IMR-90 (cell line): ENCODE measurements at regions of chr14 and their contacts with region 1.

Region 1: GRCh38 chr14:83913466-83913865 is 1616.5 kb upstream of the FLRT2 start:
- DNase-seq: peak; percentile 43
- ATAC-seq: peak; percentile 47
- H3K4me3 ChIP-seq: no peak overlapping the region
- H3K27ac ChIP-seq: no peak overlapping the region
- H3K4me1 ChIP-seq: peaks cover 8% of the 10 kb centered on the region; the same call in 1 of the 2 replicates
- H3K27me3 ChIP-seq: no peaks in the 10 kb centered on the region
- CTCF ChIP-seq: no peak
- POLR2A ChIP-seq: no peak
- RAD21 ChIP-seq: no peak

Region 2: GRCh38 chr14:83356080-83356479 is 557.4 kb before region 1 on chr14:
- CTCF ChIA-PET with region 1: no interaction called
- POLR2A ChIA-PET with region 1: no interaction called
- dilution Hi-C with region 1: no loop called
- in situ Hi-C with region 1: no loop called
- intact Hi-C with region 1: no loop called
- DNase-seq: no peak
- ATAC-seq: no peak
- H3K4me3 ChIP-seq: no peak overlapping the region
- H3K27ac ChIP-seq: no peak overlapping the region
- H3K4me1 ChIP-seq: no peaks in the 10 kb centered on the region
- H3K27me3 ChIP-seq: no peaks in the 10 kb centered on the region
- CTCF ChIP-seq: no peak
- POLR2A ChIP-seq: no peak
- RAD21 ChIP-seq: no peak

Region 3: DNA sequence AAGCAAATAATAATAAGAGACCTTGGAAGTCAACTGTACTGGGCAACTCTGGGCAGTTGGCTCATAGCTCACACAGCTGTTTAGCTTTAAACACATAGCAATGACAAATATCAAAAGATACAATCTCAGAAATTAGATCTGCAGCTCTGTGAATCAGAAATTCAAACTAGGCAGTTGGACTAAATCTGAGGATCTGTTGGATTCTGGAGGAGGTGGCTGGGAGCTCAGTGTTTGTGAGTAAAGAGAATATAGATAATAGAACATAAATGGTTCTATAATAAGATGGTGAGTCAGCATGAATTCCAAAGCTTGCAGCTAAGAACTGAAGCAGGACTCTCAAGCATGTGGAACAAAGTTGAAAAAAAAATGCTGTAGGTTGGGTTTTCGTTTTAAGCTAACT is 430.4 kb before region 1 on chr14:
- CTCF ChIA-PET with region 1: no interaction called
- POLR2A ChIA-PET with region 1: no interaction called
- dilution Hi-C with region 1: no loop called
- in situ Hi-C with region 1: no loop called
- intact Hi-C with region 1: loop called (anchors 10 kb)
- DNase-seq: peak; percentile 79
- ATAC-seq: peak; percentile 92
- H3K4me3 ChIP-seq: no peak overlapping the region
- H3K27ac ChIP-seq: no peak overlapping the region
- H3K4me1 ChIP-seq: 0 out of 2 replicates have a peak, but pooled peaks cover 1% of the 10 kb centered on the region
- H3K27me3 ChIP-seq: no peaks in the 10 kb centered on the region
- CTCF ChIP-seq: no peak
- POLR2A ChIP-seq: no peak
- RAD21 ChIP-seq: no peak

Region 4: GRCh38 chr14:83757916-83758315 is 155.6 kb before region 1 on chr14:
- CTCF ChIA-PET with region 1: no interaction called
- POLR2A ChIA-PET with region 1: no interaction called
- dilution Hi-C with region 1: no loop called
- in situ Hi-C with region 1: no loop called
- intact Hi-C with region 1: no loop called
- DNase-seq: peak; percentile 77
- ATAC-seq: no peak; the same call in 1 of the 2 replicates
- H3K4me3 ChIP-seq: no peak overlapping the region
- H3K27ac ChIP-seq: peak overlapping the region; percentile 37; the same call in 1 of the 2 replicates
- H3K4me1 ChIP-seq: no peaks in the 10 kb centered on the region
- H3K27me3 ChIP-seq: no peaks in the 10 kb centered on the region
- CTCF ChIP-seq: no peak
- POLR2A ChIP-seq: no peak
- RAD21 ChIP-seq: no peak